Natural killer cell (primary cell): ENCODE measurements at regions of chr11 and their contacts with region 1.

Region 1: DNA sequence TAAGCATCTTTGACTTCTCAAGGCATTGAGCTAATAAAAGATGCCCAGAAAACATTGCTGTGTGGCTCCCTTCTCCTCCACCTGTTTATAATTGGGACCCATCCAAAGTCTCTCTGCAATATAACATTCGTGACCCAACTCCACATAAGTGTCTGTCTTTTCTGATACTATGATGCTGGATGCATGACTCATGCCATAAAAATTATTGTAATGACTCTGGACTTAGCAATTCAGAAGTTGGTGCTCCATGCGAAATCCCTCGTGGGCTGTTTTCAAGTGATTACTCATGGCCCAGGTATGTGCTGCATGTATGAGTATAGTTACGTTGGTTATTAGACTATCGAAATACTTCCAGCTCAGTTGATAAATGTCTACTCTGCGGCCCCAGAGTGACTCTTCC is 11.7 kb downstream of the FJX1 start:
- DNase-seq: no peak
- ATAC-seq: no peak
- H3K4me3 ChIP-seq: no peak overlapping the region
- H3K4me3 Mint-ChIP-seq: no peak overlapping the region
- H3K27ac ChIP-seq: no peak overlapping the region
- H3K27ac Mint-ChIP-seq: no peak overlapping the region
- H3K4me1 ChIP-seq: no peaks in the 10 kb centered on the region
- H3K4me1 Mint-ChIP-seq: no peaks in the 10 kb centered on the region
- H3K27me3 ChIP-seq: peaks cover 11% of the 10 kb centered on the region
- H3K27me3 Mint-ChIP-seq: peaks cover 38 to 69% of the 10 kb centered on the region in 2 donors
- CTCF ChIP-seq: no peak

Region 2: DNA sequence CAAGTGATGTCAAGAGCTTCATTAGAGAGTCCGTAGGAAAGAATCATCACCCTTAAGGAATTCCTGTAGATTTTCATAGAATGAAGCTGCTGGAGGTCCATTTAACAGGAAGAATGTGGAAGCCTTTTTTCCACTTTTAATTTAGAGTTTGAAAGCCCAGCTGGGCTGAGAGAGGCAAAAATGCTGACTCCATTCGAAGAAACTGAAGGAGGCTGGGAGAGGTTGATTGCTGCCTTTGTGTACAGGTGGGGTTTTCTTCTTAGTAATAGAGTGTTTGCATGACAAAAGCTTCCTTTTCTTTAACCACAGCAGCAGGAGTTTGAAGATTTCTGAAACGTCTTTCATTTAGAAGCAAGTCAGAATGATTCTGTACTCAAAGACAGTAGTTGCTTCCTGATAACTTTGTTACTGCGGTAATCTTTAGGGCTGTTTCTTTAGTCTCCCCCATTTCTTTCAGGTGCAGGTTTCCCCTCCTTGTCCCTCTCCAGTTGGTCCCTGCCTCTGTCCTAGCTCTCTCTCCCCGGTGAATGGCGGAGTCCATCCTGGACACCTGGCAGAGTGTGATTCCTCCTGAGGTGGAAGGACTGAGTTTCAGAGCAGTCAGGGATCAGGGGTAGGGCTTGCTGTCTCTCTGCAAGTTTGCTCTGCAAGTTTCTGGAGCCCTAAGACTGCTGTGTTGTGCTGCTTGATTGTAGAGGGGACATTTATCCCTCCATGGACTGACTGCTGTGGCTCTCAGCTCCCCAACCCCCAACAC is 480.1 kb after region 1 on chr11:
- intact Hi-C with region 1: loop called (anchors 5 kb)
- DNase-seq: no peak
- ATAC-seq: no peak
- H3K4me3 ChIP-seq: no peak overlapping the region
- H3K4me3 Mint-ChIP-seq: no peak overlapping the region
- H3K27ac ChIP-seq: no peak overlapping the region
- H3K27ac Mint-ChIP-seq: no peak overlapping the region
- H3K4me1 ChIP-seq: no peaks in the 10 kb centered on the region
- H3K4me1 Mint-ChIP-seq: no peaks in the 10 kb centered on the region
- H3K27me3 ChIP-seq: no peaks in the 10 kb centered on the region
- H3K27me3 Mint-ChIP-seq: peaks cover 10 to 34% of the 10 kb centered on the region in 2 donors
- CTCF ChIP-seq: no peak

Region 3: DNA sequence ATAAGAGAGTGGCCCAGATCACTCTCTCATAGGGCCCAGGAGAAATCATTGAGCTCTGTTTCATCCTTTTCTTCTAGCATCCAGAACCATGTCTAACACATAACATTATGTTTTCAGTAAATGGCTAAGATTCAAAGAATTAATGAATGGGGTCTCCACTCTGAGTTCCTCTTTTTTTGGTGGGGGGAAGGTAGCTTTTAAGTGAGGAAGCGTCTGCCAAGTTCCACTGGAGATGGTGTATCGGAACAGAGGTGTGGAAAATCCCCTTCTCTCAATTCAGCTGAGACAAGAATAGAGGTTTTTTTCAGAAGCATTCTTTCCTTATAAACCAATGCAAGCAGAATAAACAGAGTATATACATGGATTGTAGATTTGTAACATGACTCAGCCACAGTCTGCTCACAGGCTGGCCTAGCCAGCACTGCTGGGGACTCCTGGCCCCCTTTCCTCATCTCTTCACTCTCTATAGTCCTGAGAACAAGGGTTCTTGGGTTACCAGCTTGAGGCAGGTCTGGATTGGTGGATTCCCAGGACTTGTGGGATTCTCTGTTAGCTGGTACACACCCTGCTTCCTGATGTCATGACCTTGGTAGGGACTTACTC is 783.0 kb after region 1 on chr11:
- intact Hi-C with region 1: no loop called
- DNase-seq: no peak
- ATAC-seq: no peak
- H3K4me3 ChIP-seq: no peak overlapping the region
- H3K4me3 Mint-ChIP-seq: peak overlapping the region; percentile 94
- H3K27ac ChIP-seq: peak overlapping the region; percentile 80
- H3K27ac Mint-ChIP-seq: peak overlapping the region; percentile 97 to 99
- H3K4me1 ChIP-seq: peaks cover 77% of the 10 kb centered on the region
- H3K4me1 Mint-ChIP-seq: peaks cover 81 to 83% of the 10 kb centered on the region in 2 donors
- H3K27me3 ChIP-seq: no peaks in the 10 kb centered on the region
- H3K27me3 Mint-ChIP-seq: no peaks in the 10 kb centered on the region
- CTCF ChIP-seq: no peak